Left ventricle myocardium inferior (tissue), 1 donor: ENCODE measurements at regions of chr6 and their contacts with region 1.

Region 1: DNA sequence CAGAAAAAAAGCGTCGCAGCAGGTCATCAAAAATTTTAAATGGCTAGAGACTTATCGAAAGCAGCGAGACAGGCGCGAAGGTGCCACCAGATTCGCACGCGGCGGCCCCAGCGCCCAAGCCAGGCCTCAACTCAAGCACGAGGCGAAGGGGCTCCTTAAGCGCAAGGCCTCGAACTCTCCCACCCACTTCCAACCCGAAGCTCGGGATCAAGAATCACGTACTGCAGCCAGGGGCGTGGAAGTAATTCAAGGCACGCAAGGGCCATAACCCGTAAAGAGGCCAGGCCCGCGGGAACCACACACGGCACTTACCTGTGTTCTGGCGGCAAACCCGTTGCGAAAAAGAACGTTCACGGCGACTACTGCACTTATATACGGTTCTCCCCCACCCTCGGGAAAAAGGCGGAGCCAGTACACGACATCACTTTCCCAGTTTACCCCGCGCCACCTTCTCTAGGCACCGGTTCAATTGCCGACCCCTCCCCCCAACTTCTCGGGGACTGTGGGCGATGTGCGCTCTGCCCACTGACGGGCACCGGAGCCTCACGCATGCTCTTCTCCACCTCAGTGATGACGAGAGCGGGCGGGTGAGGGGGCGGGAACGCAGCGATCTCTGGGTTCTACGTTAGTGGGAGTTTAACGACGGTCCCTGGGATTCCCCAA is at the start of gene EEF1A1:
- DNase-seq: peak; percentile 97
- H3K4me3 ChIP-seq: peak within 1 kb of the TSS; percentile 90
- H3K27ac ChIP-seq: peak within 1 kb of the TSS; percentile 99
- H3K4me1 ChIP-seq: peaks cover 80% of the 10 kb centered on the region
- H3K27me3 ChIP-seq: peaks cover 51% of the 10 kb centered on the region
- CTCF ChIP-seq: no peak
- total RNA-seq, gene EEF1A1: 1,882 TPM

Region 2: DNA sequence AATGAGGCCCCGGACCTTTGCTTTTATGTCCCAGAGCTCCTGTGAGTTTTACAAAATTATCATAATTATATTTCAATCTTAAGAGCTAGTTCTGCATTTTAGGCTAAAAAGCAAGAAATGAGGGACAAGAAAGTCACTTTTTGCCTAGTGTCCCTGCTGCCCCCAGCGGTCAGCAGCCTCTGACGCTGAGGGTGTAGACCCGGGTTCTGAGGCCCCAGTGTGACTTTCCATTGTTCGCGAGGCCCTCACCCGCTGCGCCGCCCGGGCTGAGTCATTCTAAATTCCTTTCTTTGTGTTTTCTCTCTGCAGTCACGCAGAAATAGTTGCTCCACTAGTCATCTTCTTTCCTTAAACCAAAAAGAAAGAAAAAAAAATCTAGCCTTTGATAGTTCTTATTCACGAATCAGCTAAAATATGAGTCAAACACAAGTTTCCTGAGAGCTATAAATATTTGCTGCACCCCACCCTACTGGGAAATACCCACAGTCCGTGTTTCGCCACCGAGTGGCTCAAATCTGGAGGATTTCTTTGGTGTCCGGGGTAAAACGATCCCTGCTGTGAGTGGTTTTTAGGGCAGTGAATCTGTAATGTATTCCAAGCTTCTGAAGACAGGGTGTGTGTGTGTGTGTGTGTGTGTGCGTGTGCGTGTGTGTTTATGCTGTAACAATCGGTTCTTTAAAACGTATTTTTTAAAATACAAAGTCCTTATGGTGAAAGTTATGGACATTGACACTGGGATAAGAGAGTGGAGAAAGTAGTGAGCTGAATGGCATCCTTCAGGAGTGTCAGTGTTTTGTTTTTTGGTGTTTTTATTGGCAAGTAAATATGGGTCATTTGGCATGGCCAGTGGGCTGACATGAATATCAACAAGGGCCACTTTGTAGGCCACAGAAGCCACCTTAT is 59.7 kb after region 1 on chr6:
- intact Hi-C with region 1: loop called (anchors 10 kb)
- DNase-seq: peak; percentile 78
- H3K4me3 ChIP-seq: peak overlapping the region; percentile 47
- H3K27ac ChIP-seq: peak overlapping the region; percentile 87
- H3K4me1 ChIP-seq: peaks cover 36% of the 10 kb centered on the region
- H3K27me3 ChIP-seq: peaks cover 36% of the 10 kb centered on the region
- CTCF ChIP-seq: peak; percentile 58

Region 3: GRCh38 chr6:73608761-73609160 is 87.9 kb after region 1 on chr6:
- intact Hi-C with region 1: loop called (anchors 5 kb)
- DNase-seq: no peak
- H3K4me3 ChIP-seq: no peak overlapping the region
- H3K27ac ChIP-seq: no peak overlapping the region
- H3K4me1 ChIP-seq: peaks cover 9% of the 10 kb centered on the region
- H3K27me3 ChIP-seq: no peaks in the 10 kb centered on the region
- CTCF ChIP-seq: no peak